ENCODE measurements at regions of chr5 and their contacts with region 1.

Region 1: DNA sequence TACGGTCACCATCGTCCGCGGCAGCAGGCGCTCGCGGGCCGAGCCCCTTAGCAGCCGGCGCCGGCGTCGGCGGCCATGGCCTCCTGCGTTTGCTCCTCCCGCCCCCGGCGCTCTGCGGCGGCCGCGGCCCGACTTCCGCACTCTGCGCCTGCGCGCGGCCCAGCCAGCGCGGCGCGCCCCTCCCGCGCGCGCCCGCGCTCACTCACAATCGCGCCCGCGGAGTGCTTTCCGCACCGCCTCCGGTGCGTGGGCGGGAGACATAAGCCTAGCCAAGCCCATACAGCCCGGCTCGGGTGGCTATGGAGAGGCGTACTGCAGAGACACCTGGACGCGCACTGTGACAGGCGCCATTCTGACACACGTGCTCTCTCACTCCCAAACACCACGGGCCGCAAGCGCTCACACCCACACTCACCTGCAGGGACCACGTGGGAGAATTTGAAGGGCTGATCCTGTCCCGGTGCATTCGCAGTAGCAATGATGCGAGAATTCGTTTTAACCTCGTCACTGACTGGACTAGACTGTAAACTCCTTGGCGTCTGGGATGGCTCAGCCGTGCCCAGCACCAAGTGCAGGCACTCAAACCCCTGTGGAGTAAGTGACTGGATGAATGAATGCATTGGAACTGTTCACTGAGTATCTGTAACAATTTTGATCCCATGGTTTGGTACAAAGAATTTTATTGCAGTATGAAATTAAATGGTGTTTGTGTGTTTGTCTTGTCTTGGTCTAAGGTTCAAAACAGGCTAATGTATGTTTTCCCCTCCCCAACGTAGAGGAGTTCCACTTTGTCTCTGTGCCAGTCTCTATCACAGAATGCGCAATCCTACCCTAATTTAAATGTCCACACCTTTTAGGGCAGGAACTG is at the start of gene RNF145:
- DNase-seq: peak; percentile 97
- H3K4me3 Mint-ChIP-seq: peak within 1 kb of the TSS; percentile 99
- H3K27ac Mint-ChIP-seq: peak within 1 kb of the TSS; percentile 98
- H3K4me1 Mint-ChIP-seq: peaks cover 54% of the 10 kb centered on the region
- H3K27me3 Mint-ChIP-seq: no peaks in the 10 kb centered on the region
- total RNA-seq, gene RNF145: 141 and 149 TPM in 2 replicates

Region 2: DNA sequence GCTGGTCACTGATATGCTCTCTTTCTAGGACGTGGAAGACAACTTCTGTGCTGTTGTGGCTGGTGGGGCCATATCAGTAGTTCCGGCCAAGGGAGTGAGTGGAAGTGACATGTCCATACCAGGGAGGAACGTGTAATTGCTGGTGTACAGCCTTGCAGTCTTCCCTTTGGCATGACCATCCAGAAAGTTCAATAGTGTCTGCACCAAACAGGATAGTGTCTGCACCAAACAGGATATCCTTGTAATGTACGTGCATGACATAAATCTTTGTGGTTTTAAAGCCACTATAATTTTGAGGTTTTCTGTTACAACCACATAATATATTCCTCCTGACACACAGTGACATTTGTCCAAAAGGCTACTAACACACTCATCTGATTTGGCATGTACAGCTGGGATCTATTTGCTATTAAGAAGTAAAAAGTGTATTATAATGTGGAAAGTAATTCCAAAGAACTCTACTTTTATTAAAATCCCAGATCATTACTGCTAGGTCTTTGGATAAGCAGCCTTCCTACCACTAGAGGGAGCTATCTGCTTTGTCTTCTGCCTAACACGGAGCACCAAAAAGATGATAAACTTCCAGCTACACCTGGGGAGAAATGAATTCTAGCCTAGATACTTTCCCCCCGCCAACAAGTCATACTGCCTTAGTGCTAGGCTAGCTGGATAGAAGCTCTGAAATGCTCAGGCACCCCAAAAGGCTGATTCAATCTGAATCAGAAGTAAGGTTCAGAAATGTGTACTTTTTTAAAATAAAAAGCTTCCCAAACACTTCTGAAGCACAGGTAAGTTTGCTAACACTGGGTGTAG is 53.0 kb before region 1 on chr5:
- intact Hi-C with region 1: loop called (anchors 1 kb)
- DNase-seq: peak; percentile 82
- H3K4me3 Mint-ChIP-seq: no peak overlapping the region
- H3K27ac Mint-ChIP-seq: no peak overlapping the region
- H3K4me1 Mint-ChIP-seq: peaks cover 29% of the 10 kb centered on the region
- H3K27me3 Mint-ChIP-seq: no peaks in the 10 kb centered on the region

Region 3: DNA sequence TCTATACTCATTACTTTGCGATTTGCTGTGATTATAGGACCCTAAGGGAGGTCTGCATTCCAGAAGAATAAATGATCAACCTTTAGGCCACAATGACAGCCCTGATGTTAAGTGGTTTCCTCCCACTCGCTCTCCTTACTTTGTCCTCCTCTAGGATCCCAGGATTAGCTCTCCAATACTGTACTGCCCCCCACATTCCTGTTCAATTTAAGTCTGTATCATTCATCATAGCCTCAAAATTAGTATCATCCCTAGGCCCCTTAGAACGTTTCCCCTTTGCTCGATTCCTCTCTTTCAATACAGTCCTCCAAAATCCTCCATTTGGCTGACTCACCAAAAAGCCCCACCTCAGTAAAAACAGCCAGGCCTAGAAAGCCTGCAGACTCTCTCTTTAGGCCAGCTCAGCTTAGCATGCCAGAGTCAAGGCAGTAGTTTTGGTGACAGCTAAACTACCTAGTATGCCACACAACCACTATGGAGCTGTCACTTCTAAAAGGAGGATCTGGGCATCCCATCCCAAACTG is 24.8 kb before region 1 on chr5:
- intact Hi-C with region 1: loop called (anchors 1 kb)
- DNase-seq: peak; percentile 67
- H3K4me3 Mint-ChIP-seq: peak overlapping the region; percentile 42
- H3K27ac Mint-ChIP-seq: peak overlapping the region; percentile 80
- H3K4me1 Mint-ChIP-seq: peaks cover 46% of the 10 kb centered on the region
- H3K27me3 Mint-ChIP-seq: no peaks in the 10 kb centered on the region

Region 4: GRCh38 chr5:159240301-159240870 is 30.7 kb after region 1 on chr5:
- intact Hi-C with region 1: loop called (anchors 2 kb)
- DNase-seq: no peak
- H3K4me3 Mint-ChIP-seq: no peak overlapping the region
- H3K27ac Mint-ChIP-seq: peak overlapping the region; percentile 59
- H3K4me1 Mint-ChIP-seq: peaks cover 20% of the 10 kb centered on the region
- H3K27me3 Mint-ChIP-seq: no peaks in the 10 kb centered on the region

Region 5: GRCh38 chr5:159316519-159317383 is 107.1 kb after region 1 on chr5:
- intact Hi-C with region 1: loop called (anchors 5 kb)
- DNase-seq: peak; percentile 81
- H3K4me3 Mint-ChIP-seq: no peak overlapping the region
- H3K27ac Mint-ChIP-seq: no peak overlapping the region
- H3K4me1 Mint-ChIP-seq: no peaks in the 10 kb centered on the region
- H3K27me3 Mint-ChIP-seq: peaks cover 34% of the 10 kb centered on the region

Region 6: GRCh38 chr5:160008877-160009590 is 799.4 kb after region 1 on chr5 and contains the start of gene TTC1:
- intact Hi-C with region 1: loop called (anchors 2 kb)
- DNase-seq: peak; percentile 97
- H3K4me3 Mint-ChIP-seq: peak within 1 kb of the TSS; percentile 97
- H3K27ac Mint-ChIP-seq: peak within 1 kb of the TSS; percentile 99
- H3K4me1 Mint-ChIP-seq: peaks cover 25% of the 10 kb centered on the region
- H3K27me3 Mint-ChIP-seq: peaks cover 2% of the 10 kb centered on the region
- total RNA-seq, gene TTC1: 64.8 and 68.0 TPM in 2 replicates

Region 7: GRCh38 chr5:160418561-160419457 is 1209.1 kb after region 1 on chr5 and contains the start of gene SLU7:
- intact Hi-C with region 1: loop called (anchors 5 kb)
- DNase-seq: peak; percentile 98
- H3K4me3 Mint-ChIP-seq: peak within 1 kb of the TSS; percentile 97
- H3K27ac Mint-ChIP-seq: peak within 1 kb of the TSS; percentile 97
- H3K4me1 Mint-ChIP-seq: peaks cover 61% of the 10 kb centered on the region
- H3K27me3 Mint-ChIP-seq: no peaks in the 10 kb centered on the region
- total RNA-seq, gene SLU7: 38.4 and 39.8 TPM in 2 replicates

Measured in activated CD4-positive, alpha-beta T cell treated with anti-CD3 and anti-CD28 coated beads, Interleukin-2, amount 10 ng/mL, durations not matched to agents 24 days and 14 days (primary cell).